ENCODE measurements at regions of chr12 and their contacts with region 1.

Region 1: GRCh38 chr12:114384739-114385138 is 21.2 kb downstream of the TBX5 start:
- DNase-seq: no peak
- ATAC-seq: no peak
- H3K4me3 ChIP-seq: no peak overlapping the region
- H3K4me3 Mint-ChIP-seq: no peak overlapping the region
- H3K27ac ChIP-seq: no peak overlapping the region
- H3K27ac Mint-ChIP-seq: no peak overlapping the region
- H3K4me1 ChIP-seq: no peaks in the 10 kb centered on the region
- H3K4me1 Mint-ChIP-seq: no peaks in the 10 kb centered on the region
- H3K27me3 ChIP-seq: peaks cover 0 to 3% of the 10 kb centered on the region in 2 experiments
- H3K27me3 Mint-ChIP-seq: peaks cover 36% of the 10 kb centered on the region
- CTCF ChIP-seq: no peak

Region 2: DNA sequence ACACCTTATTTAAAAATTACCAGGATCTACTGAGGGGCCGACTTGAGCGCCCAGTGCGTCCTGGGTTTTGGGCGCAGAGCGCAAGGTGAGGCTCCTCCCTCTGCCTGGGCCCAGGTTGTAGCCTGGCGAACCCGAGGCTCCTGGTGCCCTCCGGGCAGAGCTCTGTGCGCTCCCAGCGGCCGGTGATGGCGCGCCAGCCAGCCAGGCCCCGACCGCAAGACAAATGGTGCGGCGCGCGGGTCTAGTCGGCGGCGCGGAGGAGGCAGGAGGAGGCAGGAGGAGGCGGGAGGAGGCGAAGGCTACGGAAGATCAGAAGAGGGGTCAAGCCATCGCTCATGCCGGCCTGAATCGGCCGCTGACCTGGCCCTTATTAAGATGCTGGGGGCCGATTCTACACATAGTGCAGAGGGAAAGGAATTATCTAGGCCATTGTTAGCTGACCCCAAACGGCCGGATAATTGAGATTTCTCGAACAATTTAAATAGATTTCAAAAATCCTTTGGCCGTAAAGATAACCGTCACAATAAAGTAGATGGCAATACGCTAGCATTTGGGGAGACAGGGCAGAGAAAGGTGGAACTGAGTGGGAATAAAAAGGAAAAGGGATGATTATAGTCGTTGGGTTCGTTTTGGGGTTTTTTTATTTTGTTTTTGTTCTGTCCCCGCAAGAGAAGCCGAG is 18.4 kb after region 1 on chr12:
- CTCF ChIA-PET with region 1: no interaction called
- POLR2A ChIA-PET with region 1: interaction called, 3 read pairs
- intact Hi-C with region 1: loop called in 1 of 2 experiments (anchors 2 kb)
- DNase-seq: no peak
- ATAC-seq: no peak
- H3K4me3 ChIP-seq: no peak overlapping the region
- H3K4me3 Mint-ChIP-seq: no peak overlapping the region
- H3K27ac ChIP-seq: no peak overlapping the region
- H3K27ac Mint-ChIP-seq: no peak overlapping the region
- H3K4me1 ChIP-seq: no peaks in the 10 kb centered on the region
- H3K4me1 Mint-ChIP-seq: no peaks in the 10 kb centered on the region
- H3K27me3 ChIP-seq: peaks cover 89 to 98% of the 10 kb centered on the region in 2 experiments
- H3K27me3 Mint-ChIP-seq: peaks cover 95% of the 10 kb centered on the region
- CTCF ChIP-seq: no peak